RWPE1 (cell line): ENCODE measurements at regions of chr1 and their contacts with region 1.

Region 1: DNA sequence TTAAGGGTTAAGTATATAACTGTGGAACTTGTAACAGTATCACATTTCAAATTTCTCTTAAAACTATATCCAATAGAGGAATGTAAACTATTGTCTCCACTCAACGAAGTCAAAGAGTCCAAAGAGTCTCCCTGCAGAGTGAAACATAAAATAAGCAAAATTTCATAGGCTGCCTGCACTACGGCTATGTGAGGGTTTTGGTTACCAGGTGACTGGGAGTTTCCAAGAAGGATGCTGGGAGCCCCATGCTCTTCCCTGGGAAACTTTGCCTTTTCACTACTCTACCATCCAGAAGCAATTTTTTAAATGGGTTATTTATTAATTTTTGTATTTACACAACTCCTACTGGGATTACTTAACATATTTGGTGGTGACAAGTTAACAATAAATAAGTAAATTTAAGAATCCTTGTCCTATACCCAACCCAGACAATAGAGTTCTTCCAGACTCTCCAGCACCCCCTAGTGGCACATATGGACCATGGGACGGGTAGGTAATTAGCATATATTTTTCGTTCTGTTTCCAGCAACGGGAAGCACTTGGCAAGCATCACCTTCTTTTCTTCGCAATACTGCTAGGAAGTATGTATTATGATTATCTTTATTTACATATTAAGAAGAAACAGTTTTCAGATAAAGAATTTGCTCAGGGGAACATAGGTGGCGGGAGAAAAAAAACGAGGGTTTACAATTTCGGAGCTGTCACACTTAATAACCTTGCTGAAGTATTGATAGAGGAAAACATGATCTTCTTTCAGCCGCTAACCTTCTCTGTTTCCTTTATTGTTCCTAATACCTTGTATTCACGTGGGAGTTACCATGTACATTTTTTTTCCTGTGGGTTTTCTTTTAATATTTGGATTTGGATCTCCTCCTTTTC is 3.5 kb downstream of the FMO2 start:
- DNase-seq: peak; percentile 27
- H3K27ac ChIP-seq: no peak overlapping the region
- CTCF ChIP-seq: peak; percentile 42

Region 2: DNA sequence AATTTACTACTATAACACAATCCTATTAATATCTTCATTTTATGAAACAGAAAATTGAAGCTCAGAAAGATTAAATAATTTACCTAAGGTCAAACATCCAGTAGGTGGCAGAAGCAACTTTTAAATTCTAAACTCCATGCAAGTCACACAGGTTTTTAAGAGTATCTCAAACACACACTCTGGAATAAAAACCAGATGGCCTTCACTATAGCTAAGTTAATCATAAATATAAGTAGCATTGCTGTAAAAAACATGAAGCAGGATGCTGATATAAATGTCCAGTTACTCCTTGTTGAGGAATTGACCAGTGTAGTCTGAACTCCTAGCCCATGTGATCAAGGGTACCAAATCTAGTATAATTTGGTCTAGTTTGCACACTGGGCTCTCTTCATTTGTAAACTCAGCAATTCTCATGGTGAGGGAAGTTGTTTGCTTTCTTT is 107.3 kb before region 1 on chr1:
- CTCF ChIA-PET with region 1: no interaction called
- POLR2A ChIA-PET with region 1: interaction called, 10 read pairs
- DNase-seq: peak; percentile 2
- H3K27ac ChIP-seq: no peak overlapping the region
- CTCF ChIP-seq: 0 out of 2 replicates have a peak, but pooled peaks have one; percentile 19